Heart left ventricle (tissue), 16 donors: ENCODE measurements at regions of chr13 and their contacts with region 1.

Region 1: GRCh38 chr13:99264051-99264450 is 5.9 kb upstream of the GPR18 start:
- DNase-seq: no peak
- ATAC-seq: peak in 1 of 4 donors; percentile 36
- H3K4me3 ChIP-seq: no peak overlapping the region
- H3K27ac ChIP-seq: peak overlapping the region in 1 of 12 donors; percentile 25
- H3K4me1 ChIP-seq: peaks cover 0 to 29% (median 10%) of the 10 kb centered on the region in 12 donors
- H3K27me3 ChIP-seq: no peaks in the 10 kb centered on the region
- CTCF ChIP-seq: no peak
- POLR2A ChIP-seq: no peak

Region 2: GRCh38 chr13:99191879-99192399 is 72.1 kb before region 1 on chr13:
- intact Hi-C with region 1: loop called in 3 of 10 experiments (anchors 5 kb)
- DNase-seq: no peak
- ATAC-seq: no peak
- H3K4me3 ChIP-seq: no peak overlapping the region
- H3K27ac ChIP-seq: no peak overlapping the region
- H3K4me1 ChIP-seq: no peaks in the 10 kb centered on the region
- H3K27me3 ChIP-seq: no peaks in the 10 kb centered on the region
- CTCF ChIP-seq: no peak
- POLR2A ChIP-seq: no peak

Region 3: GRCh38 chr13:99208845-99209527 is 55.1 kb before region 1 on chr13:
- intact Hi-C with region 1: loop called in 2 of 10 experiments (anchors 5 kb)
- DNase-seq: no peak
- ATAC-seq: peak in 3 of 4 donors; percentile 24 to 35 (median 29)
- H3K4me3 ChIP-seq: no peak overlapping the region
- H3K27ac ChIP-seq: peak overlapping the region in 1 of 12 donors; percentile 2
- H3K4me1 ChIP-seq: peaks cover 0 to 33% (median 7%) of the 10 kb centered on the region in 12 donors
- H3K27me3 ChIP-seq: no peaks in the 10 kb centered on the region
- CTCF ChIP-seq: no peak
- POLR2A ChIP-seq: no peak